Calu3 (cell line): ENCODE measurements at regions of chr7 and their contacts with region 1.

Region 1: GRCh38 chr7:26200444-26201246 is at the start of gene HNRNPA2B1:
- DNase-seq: peak; percentile 99
- H3K4me3 Mint-ChIP-seq: peak within 1 kb of the TSS; percentile 96
- H3K27ac Mint-ChIP-seq: peak within 1 kb of the TSS; percentile 99
- H3K4me1 Mint-ChIP-seq: peaks cover 37% of the 10 kb centered on the region
- H3K27me3 Mint-ChIP-seq: no peaks in the 10 kb centered on the region
- CTCF ChIP-seq: no peak
- total RNA-seq, gene HNRNPA2B1: 880 and 924 TPM in 2 replicates

Region 2: GRCh38 chr7:26090927-26091519 is 109.6 kb before region 1 on chr7:
- CTCF ChIA-PET with region 1: no interaction called
- intact Hi-C with region 1: loop called (anchors 5 kb)
- DNase-seq: peak; percentile 27
- H3K4me3 Mint-ChIP-seq: no peak overlapping the region
- H3K27ac Mint-ChIP-seq: no peak overlapping the region
- H3K4me1 Mint-ChIP-seq: peaks cover 23% of the 10 kb centered on the region
- H3K27me3 Mint-ChIP-seq: no peaks in the 10 kb centered on the region
- CTCF ChIP-seq: peak; percentile 87

Region 3: GRCh38 chr7:26151953-26152781 is 48.5 kb before region 1 on chr7 and contains the start of gene NFE2L3:
- CTCF ChIA-PET with region 1: interaction called, 18 read pairs
- intact Hi-C with region 1: loop called (anchors 5 kb)
- DNase-seq: peak; percentile 97
- H3K4me3 Mint-ChIP-seq: peak within 1 kb of the TSS; percentile 98
- H3K27ac Mint-ChIP-seq: peak within 1 kb of the TSS; percentile 84
- H3K4me1 Mint-ChIP-seq: peaks cover 46% of the 10 kb centered on the region
- H3K27me3 Mint-ChIP-seq: no peaks in the 10 kb centered on the region
- CTCF ChIP-seq: no peak
- total RNA-seq, gene NFE2L3: 74.3 and 108 TPM in 2 replicates

Region 4: DNA sequence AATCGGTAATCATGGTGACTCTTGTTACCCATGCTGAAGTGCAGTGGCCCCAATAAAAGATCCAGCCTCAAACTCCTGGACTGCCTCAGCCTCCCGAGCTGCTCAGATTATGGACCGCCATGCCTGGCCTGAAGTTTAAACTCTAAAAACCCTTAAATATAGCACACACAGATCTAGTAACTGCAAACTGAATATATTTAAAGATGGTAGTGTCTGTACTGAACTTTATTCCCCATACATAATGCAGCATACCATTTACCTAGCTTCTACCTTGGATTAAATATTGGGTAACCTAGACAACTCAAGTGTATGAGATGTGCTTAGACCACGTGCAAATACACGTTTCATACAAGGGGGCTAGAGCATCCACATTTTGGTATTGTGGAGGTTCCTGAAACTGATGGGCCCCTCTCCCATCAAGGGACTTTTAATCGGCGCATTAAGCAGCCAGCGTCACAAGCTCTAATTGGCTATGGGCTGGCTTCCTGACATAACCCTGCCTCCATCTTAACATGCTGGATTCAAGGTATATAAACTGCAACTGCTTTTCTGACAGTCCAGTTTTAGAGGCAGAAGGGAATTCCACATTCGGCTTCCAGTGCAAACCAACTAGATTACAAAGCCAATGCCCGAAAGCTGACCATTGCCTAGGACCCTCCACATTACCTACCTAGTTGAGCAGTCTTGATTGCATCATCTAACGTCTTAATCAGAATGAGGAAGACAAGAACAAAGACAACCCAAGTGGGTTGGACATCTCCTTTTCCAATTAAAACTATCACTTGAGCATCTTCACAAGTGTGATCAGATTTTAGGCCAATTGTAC is 13.1 kb before region 1 on chr7:
- CTCF ChIA-PET with region 1: interaction called, 7 read pairs
- intact Hi-C with region 1: loop called (anchors 1 kb)
- DNase-seq: no peak
- H3K4me3 Mint-ChIP-seq: no peak overlapping the region
- H3K27ac Mint-ChIP-seq: peak overlapping the region; percentile 41
- H3K4me1 Mint-ChIP-seq: peaks cover 76% of the 10 kb centered on the region
- H3K27me3 Mint-ChIP-seq: no peaks in the 10 kb centered on the region
- CTCF ChIP-seq: no peak

Region 5: DNA sequence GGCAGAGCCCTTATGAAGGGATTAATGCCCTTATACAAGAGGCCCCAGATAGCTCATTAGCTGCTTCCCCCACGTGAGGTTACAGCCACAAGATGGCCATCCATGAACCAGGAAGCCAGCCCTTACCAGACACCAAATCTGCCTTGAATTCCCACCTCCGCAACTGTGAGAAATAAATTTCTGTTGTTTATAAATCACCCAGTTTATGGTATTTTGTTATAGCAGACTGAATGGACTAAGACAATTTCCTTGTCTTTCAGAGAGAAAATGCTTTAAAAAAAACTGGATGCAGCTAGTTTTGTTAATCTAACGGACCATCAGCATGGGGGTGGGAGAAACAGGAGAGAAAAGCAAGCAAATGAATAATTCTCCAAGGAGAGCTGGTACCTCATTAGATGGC is 37.4 kb after region 1 on chr7:
- CTCF ChIA-PET with region 1: no interaction called
- intact Hi-C with region 1: no loop called
- DNase-seq: no peak
- H3K4me3 Mint-ChIP-seq: no peak overlapping the region
- H3K27ac Mint-ChIP-seq: no peak overlapping the region
- H3K4me1 Mint-ChIP-seq: no peaks in the 10 kb centered on the region
- H3K27me3 Mint-ChIP-seq: peaks cover 29% of the 10 kb centered on the region
- CTCF ChIP-seq: no peak

Region 6: DNA sequence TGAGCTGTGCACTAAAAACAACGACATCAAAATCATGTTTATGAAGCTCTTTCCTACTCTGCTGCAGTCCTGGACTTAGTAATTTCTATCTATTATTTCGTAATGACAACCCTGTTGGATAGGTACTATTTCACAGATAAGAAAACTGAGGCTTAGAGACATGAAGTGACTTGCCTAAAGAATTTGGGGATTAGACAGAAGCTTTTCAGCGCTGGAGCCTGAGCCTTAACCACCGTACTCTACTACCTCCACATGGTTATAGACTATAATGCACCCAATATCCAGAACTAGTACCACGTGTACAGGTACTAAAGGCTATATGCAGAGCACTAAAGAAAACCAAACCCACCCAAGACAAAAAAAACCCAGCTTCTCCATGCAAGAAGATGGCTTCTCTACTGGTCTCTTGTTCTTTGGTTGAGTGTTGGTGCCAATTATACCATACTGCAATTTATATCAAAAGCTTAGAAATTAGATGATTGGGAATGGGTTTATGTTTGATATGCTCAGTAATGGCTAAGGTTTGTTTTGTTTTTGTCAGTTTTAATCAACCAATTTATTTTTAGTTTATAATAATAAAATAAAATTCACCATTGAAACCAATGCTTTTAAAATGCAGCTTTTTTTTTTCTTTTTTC is 84.5 kb after region 1 on chr7:
- CTCF ChIA-PET with region 1: no interaction called
- intact Hi-C with region 1: loop called (anchors 5 kb)
- DNase-seq: peak; percentile 18
- H3K4me3 Mint-ChIP-seq: no peak overlapping the region
- H3K27ac Mint-ChIP-seq: no peak overlapping the region
- H3K4me1 Mint-ChIP-seq: no peaks in the 10 kb centered on the region
- H3K27me3 Mint-ChIP-seq: no peaks in the 10 kb centered on the region
- CTCF ChIP-seq: no peak

Region 7: DNA sequence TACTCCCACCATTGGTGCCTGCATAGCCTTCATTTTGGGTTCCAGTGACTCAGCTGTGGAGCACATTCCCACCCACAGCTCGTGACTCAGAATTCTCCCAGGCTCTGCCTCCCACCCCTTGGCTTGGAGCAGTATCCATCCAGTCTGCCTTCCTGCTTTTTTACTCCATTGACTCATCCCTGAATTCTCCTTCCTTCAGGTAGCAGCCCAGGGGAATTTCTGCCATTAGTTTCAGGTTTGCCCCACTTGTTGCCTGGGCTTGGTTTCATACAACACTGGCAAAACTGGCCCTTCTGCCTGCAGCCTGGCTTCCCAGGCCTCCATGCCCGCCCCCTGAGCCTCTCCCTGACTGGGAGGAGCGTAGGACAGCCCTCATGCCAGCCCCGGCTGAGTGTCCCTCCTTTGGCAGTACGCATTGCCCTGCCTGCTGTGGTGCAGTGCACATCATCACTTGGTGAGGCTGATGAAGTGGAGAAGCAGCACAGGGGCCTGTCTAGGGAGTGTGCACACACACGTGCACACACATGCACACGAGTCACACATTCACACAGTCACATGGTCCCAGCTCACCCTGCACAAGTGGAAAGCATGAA is 146.1 kb after region 1 on chr7:
- CTCF ChIA-PET with region 1: no interaction called
- intact Hi-C with region 1: loop called (anchors 5 kb)
- DNase-seq: peak; percentile 53
- H3K4me3 Mint-ChIP-seq: no peak overlapping the region
- H3K27ac Mint-ChIP-seq: no peak overlapping the region
- H3K4me1 Mint-ChIP-seq: peaks cover 29% of the 10 kb centered on the region
- H3K27me3 Mint-ChIP-seq: no peaks in the 10 kb centered on the region
- CTCF ChIP-seq: no peak